ENCODE measurements at regions of chr19 and their contacts with region 1.

Region 1: GRCh38 chr19:34733826-34734600 is at the start of gene ZNF181:
- DNase-seq: peak; percentile 79 to 98 (median 89)

Region 2: DNA sequence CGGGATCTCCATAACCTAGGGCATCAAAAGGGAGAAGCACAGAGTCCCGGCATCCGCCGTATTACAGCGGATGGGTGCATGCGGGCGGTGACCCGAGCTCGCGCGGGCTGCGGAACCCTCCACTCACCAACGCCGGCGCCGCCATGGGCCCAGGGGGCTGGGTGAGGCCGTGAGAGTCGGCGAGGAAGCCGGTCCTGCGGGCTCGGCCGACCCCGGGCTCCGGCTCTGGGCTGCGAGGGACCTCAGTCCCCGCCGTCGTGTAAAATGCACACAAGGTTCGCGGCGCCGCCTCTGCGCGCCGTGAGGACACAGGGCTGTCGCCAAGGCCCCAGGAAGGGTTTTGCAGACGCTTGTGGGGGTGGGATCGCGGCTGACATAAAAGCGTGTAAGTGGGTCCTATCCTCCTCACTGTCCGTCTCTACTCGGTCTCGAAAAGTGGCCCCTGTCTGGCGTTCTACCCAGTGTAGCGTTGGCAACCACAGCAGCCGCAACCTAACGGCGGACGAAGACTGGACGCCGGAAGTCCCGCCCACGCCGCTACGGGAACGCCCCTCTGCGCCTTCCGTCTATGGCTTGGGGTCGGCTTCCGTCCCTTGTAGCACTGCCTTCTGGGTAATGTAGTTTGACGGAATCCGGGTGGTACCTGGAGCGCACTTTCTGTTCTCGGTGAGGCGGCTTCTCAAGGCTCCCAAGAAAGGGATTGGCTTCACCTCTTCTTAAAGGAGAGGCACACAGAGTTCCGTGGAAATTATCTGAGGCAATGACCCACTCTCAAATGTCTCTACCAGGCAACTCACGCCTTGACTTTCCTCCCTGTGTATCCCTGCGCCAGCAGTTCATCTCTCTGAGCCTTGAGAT is 38.9 kb after region 1 on chr19 and contains the start of gene ZNF599:
- intact Hi-C with region 1: loop called (anchors 5 kb)
- DNase-seq: peak; percentile 76 to 98 (median 88)